ENCODE measurements at regions of chr22 and their contacts with region 1.

Region 1: GRCh38 chr22:36331306-36331911 is 56.4 kb downstream of the MYH9 start:
- DNase-seq: peak; percentile 67 to 90 (median 76)
- H3K4me3 ChIP-seq: peak overlapping the region; percentile 62
- H3K4me3 Mint-ChIP-seq: peak overlapping the region; percentile 85 to 94 (median 89)
- H3K27ac ChIP-seq: peak overlapping the region; percentile 81
- H3K27ac Mint-ChIP-seq: peak overlapping the region; percentile 94 to 100 (median 99)
- H3K4me1 ChIP-seq: peaks cover 89% of the 10 kb centered on the region
- H3K4me1 Mint-ChIP-seq: peaks cover 98 to 100% (median 100%) of the 10 kb centered on the region in 3 donors
- H3K27me3 ChIP-seq: no peaks in the 10 kb centered on the region
- H3K27me3 Mint-ChIP-seq: peaks cover 0 to 3% of the 10 kb centered on the region in 2 donors

Region 2: GRCh38 chr22:36252754-36253517 is 78.5 kb before region 1 on chr22 and contains the start of gene APOL1:
- CTCF ChIA-PET with region 1: no interaction called
- POLR2A ChIA-PET with region 1: no interaction called
- DNase-seq: peak in 4 of 5 donors; percentile 39 to 70 (median 62)
- H3K4me3 ChIP-seq: peak within 1 kb of the TSS; percentile 74
- H3K4me3 Mint-ChIP-seq: peak within 1 kb of the TSS; percentile 88 to 99 (median 96)
- H3K27ac ChIP-seq: peak within 1 kb of the TSS; percentile 58
- H3K27ac Mint-ChIP-seq: peak within 1 kb of the TSS; percentile 76 to 99 (median 97)
- H3K4me1 ChIP-seq: peaks cover 38% of the 10 kb centered on the region
- H3K4me1 Mint-ChIP-seq: peaks cover 44 to 53% (median 46%) of the 10 kb centered on the region in 3 donors
- H3K27me3 ChIP-seq: no peaks in the 10 kb centered on the region
- H3K27me3 Mint-ChIP-seq: no peaks in the 10 kb centered on the region
- total RNA-seq, gene APOL1: 32.8 to 34.3 TPM

Region 3: GRCh38 chr22:36267896-36268485 is 63.4 kb before region 1 on chr22:
- CTCF ChIA-PET with region 1: no interaction called
- POLR2A ChIA-PET with region 1: no interaction called
- DNase-seq: no peak
- H3K4me3 ChIP-seq: no peak overlapping the region
- H3K4me3 Mint-ChIP-seq: no peak overlapping the region
- H3K27ac ChIP-seq: no peak overlapping the region
- H3K27ac Mint-ChIP-seq: peak overlapping the region in 2 of 8 donors; percentile 37 to 61
- H3K4me1 ChIP-seq: no peaks in the 10 kb centered on the region
- H3K4me1 Mint-ChIP-seq: peaks cover 0 to 4% (median 0%) of the 10 kb centered on the region in 3 donors
- H3K27me3 ChIP-seq: no peaks in the 10 kb centered on the region
- H3K27me3 Mint-ChIP-seq: peaks cover 0 to 5% of the 10 kb centered on the region in 2 donors

Region 4: DNA sequence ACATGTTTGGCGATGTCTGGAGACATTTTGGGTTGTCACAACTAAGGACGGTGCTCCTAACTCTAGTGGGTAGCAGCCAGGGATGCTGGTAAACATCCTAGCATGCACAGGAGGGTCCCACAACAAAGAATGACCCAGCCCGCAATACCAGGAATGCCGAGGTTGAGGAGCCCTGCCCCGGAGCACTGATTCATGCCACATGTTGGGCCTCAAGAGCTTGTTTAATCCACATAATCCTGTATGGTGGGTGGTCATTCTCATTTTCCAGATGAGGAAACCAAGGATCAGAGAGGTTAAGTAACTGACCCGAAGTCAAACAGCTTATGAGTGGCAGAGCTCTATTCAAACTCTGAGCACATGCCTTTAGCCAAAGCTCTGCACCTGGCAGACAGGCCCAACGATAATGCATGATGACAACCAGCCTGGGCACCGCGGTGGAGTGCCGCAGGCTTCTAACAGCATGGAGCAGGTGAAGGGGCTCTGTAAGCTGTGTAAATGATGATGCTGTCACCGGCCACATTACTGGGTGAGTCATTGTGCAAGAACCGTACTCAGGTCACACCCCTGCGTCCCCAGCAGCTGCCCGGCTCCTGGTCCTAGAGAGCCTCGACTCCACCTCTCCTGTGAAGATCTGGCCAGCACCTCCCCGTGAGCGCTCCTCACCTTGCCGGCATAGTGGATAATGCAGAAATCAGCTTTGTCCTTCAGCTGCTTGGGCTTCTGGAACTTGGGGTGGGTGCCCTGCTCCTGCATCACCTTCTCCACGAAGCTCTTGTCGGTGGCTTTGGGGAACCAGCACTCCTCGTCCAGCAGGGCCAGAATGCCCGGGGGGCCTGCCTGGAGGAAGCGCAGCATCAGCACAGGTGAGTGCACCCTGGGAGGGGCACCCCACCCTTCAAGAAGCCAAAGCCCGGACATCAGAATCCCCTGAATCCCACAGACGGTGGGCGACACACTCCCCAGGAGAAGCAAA is 19.7 kb before region 1 on chr22:
- CTCF ChIA-PET with region 1: interaction called, 13 read pairs
- POLR2A ChIA-PET with region 1: interaction called, 5 read pairs
- DNase-seq: no peak
- H3K4me3 ChIP-seq: no peak overlapping the region
- H3K4me3 Mint-ChIP-seq: no peak overlapping the region
- H3K27ac ChIP-seq: no peak overlapping the region
- H3K27ac Mint-ChIP-seq: peak overlapping the region in 3 of 8 donors; percentile 38 to 73 (median 70)
- H3K4me1 ChIP-seq: no peaks in the 10 kb centered on the region
- H3K4me1 Mint-ChIP-seq: peaks cover 3 to 7% (median 5%) of the 10 kb centered on the region in 3 donors
- H3K27me3 ChIP-seq: no peaks in the 10 kb centered on the region
- H3K27me3 Mint-ChIP-seq: peaks cover 0 to 2% of the 10 kb centered on the region in 2 donors

Region 5: DNA sequence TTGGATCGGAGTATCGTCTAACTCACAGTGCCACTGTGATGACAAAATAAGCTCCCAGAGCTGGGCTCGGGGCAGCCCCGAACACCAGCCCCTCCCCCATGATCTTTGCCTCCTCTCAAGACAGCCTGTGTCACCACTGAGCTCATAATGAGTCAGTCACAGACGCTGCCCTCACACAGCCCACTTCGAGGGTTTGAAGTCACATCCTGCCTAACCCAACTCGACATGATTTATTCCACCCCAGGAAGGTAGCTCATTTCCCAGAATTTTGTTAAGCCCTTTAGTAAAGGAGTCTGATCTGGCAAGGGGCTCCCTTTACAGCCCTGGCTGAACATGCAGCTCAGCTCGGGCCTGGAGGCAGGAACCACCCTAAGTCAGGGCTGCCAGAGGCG is 33.6 kb after region 1 on chr22:
- CTCF ChIA-PET with region 1: interaction called, 22 read pairs
- POLR2A ChIA-PET with region 1: interaction called, 16 read pairs
- DNase-seq: peak; percentile 83 to 95 (median 87)
- H3K4me3 ChIP-seq: no peak overlapping the region
- H3K4me3 Mint-ChIP-seq: peak overlapping the region; percentile 39 to 84 (median 77)
- H3K27ac ChIP-seq: peak overlapping the region; percentile 73
- H3K27ac Mint-ChIP-seq: peak overlapping the region; percentile 93 to 99 (median 94)
- H3K4me1 ChIP-seq: peaks cover 98% of the 10 kb centered on the region
- H3K4me1 Mint-ChIP-seq: peaks cover 93 to 100% (median 99%) of the 10 kb centered on the region in 3 donors
- H3K27me3 ChIP-seq: no peaks in the 10 kb centered on the region
- H3K27me3 Mint-ChIP-seq: peaks cover 0 to 6% of the 10 kb centered on the region in 2 donors

Region 6: DNA sequence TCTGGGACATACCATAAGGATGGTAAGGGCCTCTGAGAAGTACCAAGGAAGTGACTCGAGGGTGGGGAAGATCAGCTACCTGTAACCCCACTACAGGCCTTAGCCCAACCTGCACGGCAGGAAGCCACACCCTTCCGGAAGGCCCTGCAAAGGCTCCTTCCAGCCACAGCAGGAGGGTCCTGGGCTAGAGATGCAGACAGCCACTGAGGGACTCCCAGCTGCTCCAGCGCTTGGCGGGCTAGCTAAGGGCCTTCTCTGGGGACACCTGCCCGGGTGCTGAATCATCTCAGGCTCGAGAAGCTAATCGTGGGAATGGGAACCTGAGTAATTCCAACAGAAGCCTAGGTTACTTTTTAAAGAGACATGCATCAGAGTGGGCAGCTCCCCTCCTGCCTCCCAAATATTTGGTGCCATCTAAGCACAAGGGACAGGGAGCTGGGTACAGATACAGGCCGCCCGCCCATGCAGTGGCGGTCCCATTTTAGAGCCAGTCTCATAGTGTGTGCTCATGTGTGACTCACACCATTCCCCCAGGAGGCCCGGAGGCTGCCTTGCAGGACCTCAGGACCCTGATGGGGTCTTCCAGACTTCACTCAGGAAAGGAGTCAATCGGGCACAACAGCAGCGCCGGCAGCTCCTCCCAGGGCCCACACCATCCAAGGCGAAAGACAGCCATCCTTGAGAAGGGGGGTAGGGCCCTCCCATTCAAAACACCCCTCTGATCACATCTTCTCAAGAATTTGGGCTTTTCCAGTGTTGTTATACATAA is 48.4 kb after region 1 on chr22:
- CTCF ChIA-PET with region 1: interaction called, 48 read pairs
- POLR2A ChIA-PET with region 1: interaction called, 76 read pairs
- DNase-seq: peak; percentile 42 to 81 (median 64)
- H3K4me3 ChIP-seq: peak overlapping the region; percentile 52
- H3K4me3 Mint-ChIP-seq: peak overlapping the region; percentile 61 to 88 (median 84)
- H3K27ac ChIP-seq: peak overlapping the region; percentile 48
- H3K27ac Mint-ChIP-seq: peak overlapping the region; percentile 89 to 99 (median 98)
- H3K4me1 ChIP-seq: peaks cover 96% of the 10 kb centered on the region
- H3K4me1 Mint-ChIP-seq: peaks cover 84 to 94% (median 91%) of the 10 kb centered on the region in 3 donors
- H3K27me3 ChIP-seq: no peaks in the 10 kb centered on the region
- H3K27me3 Mint-ChIP-seq: no peaks in the 10 kb centered on the region

Region 7: DNA sequence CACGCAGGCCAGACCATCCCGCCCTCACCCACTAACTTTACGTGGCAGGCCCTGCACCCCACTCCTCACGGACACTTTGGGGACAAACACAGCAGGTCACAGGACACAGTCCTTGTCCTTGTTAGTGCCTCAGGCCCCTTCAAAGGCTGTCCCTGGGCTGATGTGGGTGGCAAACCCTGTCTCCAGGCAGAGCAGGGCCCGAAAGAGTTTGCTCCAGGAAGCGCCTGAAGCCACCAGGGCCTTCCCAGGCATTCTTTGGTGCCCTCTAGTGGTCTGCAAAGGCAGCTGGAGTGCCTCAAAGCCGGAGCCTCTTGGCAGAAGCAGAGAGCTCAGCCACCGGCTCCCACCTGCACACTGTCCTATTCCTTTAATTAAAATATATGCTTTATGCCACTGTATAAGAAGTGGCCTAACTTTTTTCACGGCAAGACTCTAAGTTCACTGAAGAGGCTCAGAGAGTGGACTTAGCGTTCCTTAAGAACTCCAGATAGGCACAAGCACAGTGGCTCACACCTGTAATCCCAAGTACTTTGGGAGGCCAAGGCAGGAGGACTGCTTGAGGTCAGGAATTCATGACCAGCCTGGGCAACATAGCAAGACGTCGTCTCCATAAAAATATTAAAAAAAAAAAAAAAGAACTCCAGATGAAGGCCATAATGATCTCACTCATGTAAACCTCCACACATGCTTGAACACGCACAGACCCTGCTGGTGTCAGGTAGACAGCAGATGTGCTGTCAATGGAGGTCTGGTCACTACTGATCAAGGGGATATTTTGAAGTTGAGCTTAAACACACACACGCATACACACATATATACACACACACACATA is 139.0 kb after region 1 on chr22:
- CTCF ChIA-PET with region 1: interaction called, 26 read pairs
- POLR2A ChIA-PET with region 1: interaction called, 4 read pairs
- DNase-seq: peak; percentile 72 to 90 (median 83)
- H3K4me3 ChIP-seq: no peak overlapping the region
- H3K4me3 Mint-ChIP-seq: no peak overlapping the region
- H3K27ac ChIP-seq: no peak overlapping the region
- H3K27ac Mint-ChIP-seq: peak overlapping the region in 7 of 8 donors; percentile 35 to 80 (median 75)
- H3K4me1 ChIP-seq: peaks cover 21% of the 10 kb centered on the region
- H3K4me1 Mint-ChIP-seq: peaks cover 13 to 23% (median 14%) of the 10 kb centered on the region in 3 donors
- H3K27me3 ChIP-seq: no peaks in the 10 kb centered on the region
- H3K27me3 Mint-ChIP-seq: no peaks in the 10 kb centered on the region

Measured in CD8-positive, alpha-beta memory T cell (primary cell).